ENCODE measurements at regions of chr5 and their contacts with region 1.

Region 1: DNA sequence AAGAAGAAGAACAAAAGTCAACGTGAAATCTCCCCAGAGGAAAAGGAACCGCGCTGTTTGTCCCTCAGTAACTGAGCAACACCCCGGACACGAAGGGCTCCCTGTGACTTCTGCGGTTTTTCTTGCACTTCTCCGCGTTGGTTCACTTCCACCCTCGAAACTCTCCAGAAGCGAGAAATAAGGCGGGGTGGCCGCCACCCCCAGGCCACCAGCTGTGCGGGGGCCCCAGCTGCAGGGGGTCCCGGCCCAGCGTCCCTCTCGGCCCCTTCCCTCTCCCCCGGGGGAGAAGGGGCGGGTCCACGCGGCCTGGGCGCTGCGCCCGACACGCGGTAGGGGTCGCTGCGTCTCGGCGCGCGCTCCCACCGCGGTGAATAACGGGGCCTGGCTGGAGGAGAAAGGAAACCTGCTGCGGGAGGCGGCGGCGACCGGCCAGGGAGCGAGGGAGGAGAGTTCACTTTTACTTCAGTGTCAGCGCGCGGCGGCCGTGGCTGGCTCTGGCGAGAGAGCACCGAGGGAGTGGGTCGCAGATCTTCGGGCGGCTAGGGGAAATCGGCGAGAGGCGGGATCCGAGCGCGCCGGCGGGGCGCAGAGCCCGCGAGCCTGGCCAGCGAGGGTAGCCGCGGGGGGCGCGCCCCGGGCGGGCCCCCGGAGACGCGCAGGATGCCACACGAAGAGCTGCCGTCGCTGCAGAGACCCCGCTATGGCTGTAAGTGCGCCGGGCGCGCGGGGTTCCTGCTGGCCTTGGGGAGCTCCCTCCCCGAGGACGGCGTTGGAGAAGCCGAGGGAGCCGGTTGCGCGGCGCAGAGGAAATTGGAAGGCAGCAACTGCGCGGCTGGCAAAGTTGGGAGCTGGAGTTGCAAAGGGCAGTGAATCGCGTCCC is at the start of gene IQGAP2:
- H3K4me3 ChIP-seq: peak within 1 kb of the TSS; percentile 78
- H3K27ac ChIP-seq: peak within 1 kb of the TSS; percentile 80; the same call in 1 of the 2 replicates
- H3K4me1 ChIP-seq: 0 out of 2 replicates have a peak, but pooled peaks cover 2% of the 10 kb centered on the region
- CTCF ChIP-seq: peak; percentile 96

Region 2: DNA sequence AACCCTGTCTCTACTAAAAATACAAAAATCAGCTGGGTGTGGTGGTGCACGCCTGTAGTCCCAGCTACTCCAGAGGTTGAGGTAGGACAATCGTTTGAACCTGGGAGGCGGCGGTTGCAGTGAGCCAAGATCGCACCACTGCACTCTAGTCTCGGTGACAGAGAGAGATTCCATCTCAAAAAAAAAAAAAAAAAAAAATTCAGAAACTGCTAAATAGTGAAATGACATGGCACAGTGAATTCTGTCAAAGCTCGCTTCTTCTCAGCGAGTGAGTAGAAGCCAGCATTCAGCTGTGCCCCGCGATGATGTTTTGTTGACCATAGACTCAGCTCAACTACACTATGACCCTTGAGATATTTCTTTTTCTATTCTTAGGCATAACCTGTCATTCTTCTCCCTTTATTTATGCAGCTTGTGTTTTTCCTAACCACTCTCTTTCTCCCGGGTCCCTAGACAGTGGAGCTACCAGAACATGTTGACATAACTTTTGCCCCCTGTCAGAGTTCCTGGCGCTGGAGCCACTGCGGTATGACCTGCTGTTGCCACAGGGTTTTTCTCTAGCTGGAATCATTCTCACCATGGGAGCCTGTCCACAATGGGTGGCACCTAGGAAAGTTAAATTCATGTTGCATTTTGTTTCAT is 13.5 kb before region 1 on chr5:
- CTCF ChIA-PET with region 1: interaction called, 10 read pairs
- POLR2A ChIA-PET with region 1: no interaction called
- H3K4me3 ChIP-seq: no peak overlapping the region
- H3K27ac ChIP-seq: no peak overlapping the region
- H3K4me1 ChIP-seq: no peaks in the 10 kb centered on the region
- CTCF ChIP-seq: no peak

Region 3: DNA sequence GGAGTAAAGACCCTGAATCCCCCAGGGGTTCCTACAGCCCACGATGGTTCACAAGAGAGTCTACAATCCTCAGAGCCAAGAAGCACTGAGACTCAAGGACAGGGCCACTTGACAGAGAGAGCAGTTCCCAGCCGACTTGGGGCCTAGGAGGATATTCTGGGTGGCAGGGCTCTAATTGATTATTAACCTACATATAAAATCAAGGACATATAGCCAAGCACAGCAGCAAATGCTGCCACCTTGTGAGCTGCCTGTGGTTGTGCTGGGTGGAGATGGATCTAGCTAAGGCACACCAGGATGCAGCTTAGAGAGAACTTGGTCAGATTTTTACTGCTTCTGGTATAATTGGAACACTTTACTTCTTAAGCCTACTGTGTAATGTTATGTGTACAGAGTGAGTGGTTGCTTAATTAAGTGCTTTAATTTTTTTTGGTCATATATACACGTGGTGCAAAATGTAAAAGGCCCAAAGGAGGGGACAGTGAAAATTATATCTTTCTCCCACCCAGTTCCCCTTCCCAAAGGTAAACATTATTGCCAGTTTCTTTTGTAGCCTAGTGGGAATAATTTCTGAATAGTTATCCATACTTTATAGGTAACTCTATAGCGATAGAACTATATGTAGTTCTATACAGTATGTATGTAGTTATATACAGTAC is 141.3 kb after region 1 on chr5:
- CTCF ChIA-PET with region 1: interaction called, 20 read pairs
- POLR2A ChIA-PET with region 1: interaction called, 3 read pairs
- H3K4me3 ChIP-seq: no peak overlapping the region
- H3K27ac ChIP-seq: no peak overlapping the region
- H3K4me1 ChIP-seq: peaks cover 6% of the 10 kb centered on the region; the same call in 1 of the 2 replicates
- CTCF ChIP-seq: peak; percentile 55; the same call in 1 of the 2 replicates

Region 4: GRCh38 chr5:76582230-76583162 is 179.4 kb after region 1 on chr5:
- CTCF ChIA-PET with region 1: interaction called, 31 read pairs
- POLR2A ChIA-PET with region 1: interaction called, 3 read pairs
- H3K4me3 ChIP-seq: no peak overlapping the region
- H3K27ac ChIP-seq: no peak overlapping the region
- H3K4me1 ChIP-seq: peaks cover 12% of the 10 kb centered on the region; the same call in 1 of the 2 replicates
- CTCF ChIP-seq: no peak

Measured in HEK293 (cell line).